ENCODE measurements at regions of chr4 and their contacts with region 1.

Region 1: GRCh38 chr4:149493492-149493891 is 322.2 kb downstream of the IQCM start:
- DNase-seq: no peak
- H3K4me3 ChIP-seq: no peak overlapping the region
- H3K27ac ChIP-seq: no peak overlapping the region
- H3K4me1 ChIP-seq: no peaks in the 10 kb centered on the region
- H3K27me3 ChIP-seq: no peaks in the 10 kb centered on the region
- CTCF ChIP-seq: no peak
- POLR2A ChIP-seq: no peak

Region 2: GRCh38 chr4:149426461-149426860 is 67.0 kb before region 1 on chr4:
- intact Hi-C with region 1: loop called (anchors 1 kb)
- DNase-seq: no peak
- H3K4me3 ChIP-seq: no peak overlapping the region
- H3K27ac ChIP-seq: no peak overlapping the region
- H3K4me1 ChIP-seq: no peaks in the 10 kb centered on the region
- H3K27me3 ChIP-seq: no peaks in the 10 kb centered on the region
- CTCF ChIP-seq: no peak
- POLR2A ChIP-seq: no peak

Region 3: GRCh38 chr4:149584722-149585121 is 91.2 kb after region 1 on chr4:
- intact Hi-C with region 1: no loop called
- DNase-seq: no peak
- H3K4me3 ChIP-seq: no peak overlapping the region
- H3K27ac ChIP-seq: no peak overlapping the region
- H3K4me1 ChIP-seq: no peaks in the 10 kb centered on the region
- H3K27me3 ChIP-seq: no peaks in the 10 kb centered on the region
- CTCF ChIP-seq: no peak
- POLR2A ChIP-seq: no peak